ENCODE measurements at regions of chr19 and their contacts with region 1.

Region 1: GRCh38 chr19:12202250-12202649 is 39.4 kb downstream of the ZNF136 start:
- DNase-seq: peak; percentile 44 to 79 (median 60)
- ATAC-seq: peak; percentile 91
- H3K4me3 ChIP-seq: no peak overlapping the region
- H3K4me3 Mint-ChIP-seq: peak overlapping the region; percentile 49
- H3K27ac ChIP-seq: no peak overlapping the region
- H3K27ac Mint-ChIP-seq: peak overlapping the region; percentile 51
- H3K4me1 ChIP-seq: peaks cover 15% of the 10 kb centered on the region
- H3K4me1 Mint-ChIP-seq: peaks cover 47% of the 10 kb centered on the region
- H3K27me3 ChIP-seq: no peaks in the 10 kb centered on the region
- H3K27me3 Mint-ChIP-seq: no peaks in the 10 kb centered on the region
- CTCF ChIP-seq: peak; percentile 71

Region 2: DNA sequence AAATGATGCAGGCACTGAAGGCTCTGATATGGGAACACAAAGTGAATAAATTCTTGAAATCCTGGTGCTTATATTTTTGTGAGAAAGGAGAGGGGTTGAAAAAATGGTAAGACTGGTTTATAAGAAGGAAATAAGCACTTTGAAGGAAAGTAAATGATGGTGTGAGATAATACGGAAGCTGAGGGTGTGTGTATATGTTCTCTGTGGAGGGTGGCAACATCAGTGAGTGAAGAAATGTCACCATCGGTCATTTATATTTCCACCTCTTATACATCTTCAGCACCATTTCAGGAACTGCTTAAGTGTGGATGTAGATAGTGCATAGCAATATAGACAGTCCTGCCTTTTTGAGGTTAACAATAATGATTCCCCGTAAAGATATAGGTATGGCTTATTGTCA is 21.9 kb before region 1 on chr19:
- CTCF ChIA-PET with region 1: no interaction called
- POLR2A ChIA-PET with region 1: no interaction called
- intact Hi-C with region 1: no loop called
- DNase-seq: no peak
- ATAC-seq: no peak
- H3K4me3 ChIP-seq: no peak overlapping the region
- H3K4me3 Mint-ChIP-seq: no peak overlapping the region
- H3K27ac ChIP-seq: no peak overlapping the region
- H3K27ac Mint-ChIP-seq: no peak overlapping the region
- H3K4me1 ChIP-seq: peaks cover 5% of the 10 kb centered on the region
- H3K4me1 Mint-ChIP-seq: peaks cover 29% of the 10 kb centered on the region
- H3K27me3 ChIP-seq: no peaks in the 10 kb centered on the region
- H3K27me3 Mint-ChIP-seq: no peaks in the 10 kb centered on the region
- CTCF ChIP-seq: no peak

Region 3: GRCh38 chr19:12244370-12244769 is 42.1 kb after region 1 on chr19:
- CTCF ChIA-PET with region 1: no interaction called
- POLR2A ChIA-PET with region 1: no interaction called
- intact Hi-C with region 1: no loop called
- DNase-seq: no peak
- ATAC-seq: no peak
- H3K4me3 ChIP-seq: no peak overlapping the region
- H3K4me3 Mint-ChIP-seq: no peak overlapping the region
- H3K27ac ChIP-seq: no peak overlapping the region
- H3K27ac Mint-ChIP-seq: no peak overlapping the region
- H3K4me1 ChIP-seq: no peaks in the 10 kb centered on the region
- H3K4me1 Mint-ChIP-seq: no peaks in the 10 kb centered on the region
- H3K27me3 ChIP-seq: no peaks in the 10 kb centered on the region
- H3K27me3 Mint-ChIP-seq: no peaks in the 10 kb centered on the region
- CTCF ChIP-seq: no peak

Region 4: DNA sequence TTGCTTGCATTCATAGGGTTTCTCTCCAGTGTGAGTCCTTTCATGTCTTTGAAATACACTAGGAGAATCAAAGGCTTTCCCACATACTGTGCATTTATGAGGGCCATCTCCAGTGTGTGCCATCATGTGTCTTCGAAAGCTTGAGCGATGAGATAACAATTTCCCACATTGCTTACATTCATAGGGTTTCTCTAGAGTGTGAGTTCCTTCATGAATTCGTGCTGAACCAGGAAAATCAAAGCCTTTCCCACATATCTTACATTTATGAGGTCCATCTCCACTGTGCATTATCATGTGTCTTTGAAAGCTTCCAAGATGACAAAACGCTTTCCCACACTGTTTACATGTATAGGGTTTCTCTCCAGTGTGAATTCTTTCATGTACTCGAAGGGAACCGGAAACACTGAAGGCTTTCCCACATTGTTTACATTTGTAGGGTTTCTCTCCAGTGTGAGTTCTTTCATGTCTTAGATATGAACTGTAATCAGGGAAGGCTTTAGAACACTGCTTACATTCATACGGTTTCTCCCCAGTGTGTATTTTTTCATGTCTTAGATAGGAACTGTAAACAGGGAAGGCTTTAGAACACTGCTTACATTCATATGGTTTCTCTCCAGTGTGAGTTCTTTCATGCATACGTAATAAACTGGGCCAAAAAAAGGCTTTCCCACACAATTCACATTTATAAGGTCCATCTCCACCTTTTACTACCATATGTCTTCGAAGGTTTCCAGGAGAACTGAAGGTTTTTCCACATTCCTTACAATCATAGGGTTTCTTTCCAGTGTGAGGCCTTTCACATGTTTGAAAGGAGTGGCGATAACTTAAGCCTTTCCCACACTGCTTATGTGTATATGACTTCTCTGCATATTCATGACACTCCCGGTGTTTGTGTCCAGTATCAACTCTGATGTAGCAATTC is 71.0 kb after region 1 on chr19:
- CTCF ChIA-PET with region 1: no interaction called
- POLR2A ChIA-PET with region 1: no interaction called
- intact Hi-C with region 1: loop called in 1 of 2 experiments (anchors 5 kb)
- DNase-seq: no peak
- ATAC-seq: no peak
- H3K4me3 ChIP-seq: no peak overlapping the region
- H3K4me3 Mint-ChIP-seq: no peak overlapping the region
- H3K27ac ChIP-seq: no peak overlapping the region
- H3K27ac Mint-ChIP-seq: peak overlapping the region; percentile 18
- H3K4me1 ChIP-seq: peaks cover 4% of the 10 kb centered on the region
- H3K4me1 Mint-ChIP-seq: peaks cover 18% of the 10 kb centered on the region
- H3K27me3 ChIP-seq: no peaks in the 10 kb centered on the region
- H3K27me3 Mint-ChIP-seq: no peaks in the 10 kb centered on the region
- CTCF ChIP-seq: no peak

Region 5: DNA sequence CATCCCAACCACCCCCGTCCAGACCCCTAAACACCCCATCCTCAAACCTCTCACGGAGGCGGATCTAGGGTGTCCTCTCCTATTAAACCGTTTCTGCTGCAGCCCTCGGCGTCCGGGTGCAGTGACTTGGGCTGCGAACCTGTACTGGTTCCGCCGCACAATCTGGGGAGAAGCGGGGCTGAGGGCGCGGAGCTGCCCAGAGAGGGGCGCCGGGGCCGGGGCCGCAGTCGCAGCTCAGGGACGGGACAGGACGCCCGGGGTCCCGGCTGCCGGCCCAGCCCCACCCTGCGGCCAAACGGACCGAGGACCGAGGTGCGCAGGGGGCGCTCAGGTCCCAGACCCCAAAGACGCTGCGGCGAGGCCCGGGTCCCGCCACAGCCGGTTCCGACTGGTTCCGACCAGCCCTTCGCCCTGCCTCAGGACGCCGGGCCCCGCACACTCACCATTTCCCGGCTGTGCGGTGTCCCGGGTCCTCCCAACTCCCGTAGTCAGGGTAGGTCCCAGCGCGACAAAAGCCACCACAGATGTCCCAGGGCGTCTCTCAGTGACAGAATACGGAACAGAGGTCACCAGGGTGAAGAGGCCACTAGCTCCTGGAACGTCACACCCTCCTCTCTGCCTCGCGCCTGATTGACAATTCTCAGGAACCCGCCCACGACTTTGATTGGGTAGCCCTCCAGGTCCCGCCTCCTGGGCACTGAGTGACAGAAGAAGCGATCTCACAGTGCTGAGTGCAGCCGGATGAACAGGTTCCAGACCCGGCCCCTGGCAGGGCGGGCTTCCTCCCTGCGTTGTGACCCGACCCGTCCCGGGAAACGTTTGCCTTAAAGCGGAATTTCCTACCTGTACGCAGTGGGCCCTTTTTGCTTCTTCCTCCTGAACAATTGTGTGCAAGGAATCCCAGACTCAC is 92.3 kb after region 1 on chr19 and contains the start of gene ZNF44:
- CTCF ChIA-PET with region 1: no interaction called
- POLR2A ChIA-PET with region 1: no interaction called
- intact Hi-C with region 1: loop called (anchors 5 to 10 kb)
- DNase-seq: peak; percentile 88 to 99 (median 94)
- ATAC-seq: peak; percentile 95
- H3K4me3 ChIP-seq: peak within 1 kb of the TSS; percentile 96
- H3K4me3 Mint-ChIP-seq: peak within 1 kb of the TSS; percentile 98
- H3K27ac ChIP-seq: peak within 1 kb of the TSS; percentile 78 to 92
- H3K27ac Mint-ChIP-seq: peak within 1 kb of the TSS; percentile 99
- H3K4me1 ChIP-seq: peaks cover 46% of the 10 kb centered on the region
- H3K4me1 Mint-ChIP-seq: peaks cover 41% of the 10 kb centered on the region
- H3K27me3 ChIP-seq: no peaks in the 10 kb centered on the region
- H3K27me3 Mint-ChIP-seq: no peaks in the 10 kb centered on the region
- CTCF ChIP-seq: no peak
- total RNA-seq, gene ZNF44: 30.4 to 31.4 TPM

Region 6: GRCh38 chr19:12346896-12347295 is 144.6 kb after region 1 on chr19:
- CTCF ChIA-PET with region 1: interaction called, 3 read pairs
- POLR2A ChIA-PET with region 1: no interaction called
- intact Hi-C with region 1: loop called (anchors 1 kb)
- DNase-seq: peak in 5 of 14 experiments; percentile 15 to 73 (median 56)
- ATAC-seq: peak; percentile 52
- H3K4me3 ChIP-seq: no peak overlapping the region
- H3K4me3 Mint-ChIP-seq: no peak overlapping the region
- H3K27ac ChIP-seq: no peak overlapping the region
- H3K27ac Mint-ChIP-seq: no peak overlapping the region
- H3K4me1 ChIP-seq: no peaks in the 10 kb centered on the region
- H3K4me1 Mint-ChIP-seq: no peaks in the 10 kb centered on the region
- H3K27me3 ChIP-seq: no peaks in the 10 kb centered on the region
- H3K27me3 Mint-ChIP-seq: no peaks in the 10 kb centered on the region
- CTCF ChIP-seq: peak; percentile 58

Region 7: DNA sequence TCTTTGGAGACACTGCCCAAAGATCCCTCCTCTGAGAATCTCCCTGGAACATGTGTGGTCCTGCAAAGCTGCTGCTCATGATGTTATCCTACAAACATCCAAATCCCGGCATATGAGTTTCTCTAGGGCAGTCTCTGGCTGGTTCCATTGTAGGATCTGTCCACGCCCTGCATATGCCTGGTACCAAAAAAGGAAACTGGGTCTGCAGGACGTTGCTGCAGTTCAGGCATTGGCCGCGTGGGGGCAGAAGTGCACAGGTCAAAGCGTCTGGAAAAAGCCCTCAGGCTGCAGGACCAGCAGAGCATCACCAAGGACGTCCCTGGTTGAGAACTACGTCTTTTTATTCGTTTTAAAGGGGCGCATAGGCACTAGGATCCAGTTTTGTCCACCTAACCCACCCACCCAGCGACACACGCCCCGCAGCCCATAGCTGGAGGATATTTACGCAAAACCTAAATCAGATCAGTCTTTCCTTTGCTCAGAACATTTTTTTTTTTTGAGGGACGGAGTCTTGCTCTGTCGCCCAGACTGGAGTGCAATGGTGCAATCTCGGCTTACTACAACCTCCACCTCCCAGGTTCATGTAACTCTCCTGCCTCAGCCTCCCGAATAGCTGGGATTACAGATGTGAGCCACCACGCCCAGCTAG is 361.9 kb after region 1 on chr19:
- CTCF ChIA-PET with region 1: no interaction called
- POLR2A ChIA-PET with region 1: no interaction called
- intact Hi-C with region 1: loop called in 1 of 2 experiments (anchors 5 kb)
- DNase-seq: peak; percentile 76 to 97 (median 92)
- ATAC-seq: peak; percentile 100
- H3K4me3 ChIP-seq: no peak overlapping the region
- H3K4me3 Mint-ChIP-seq: no peak overlapping the region
- H3K27ac ChIP-seq: no peak overlapping the region
- H3K27ac Mint-ChIP-seq: no peak overlapping the region
- H3K4me1 ChIP-seq: peaks cover 8% of the 10 kb centered on the region
- H3K4me1 Mint-ChIP-seq: peaks cover 5% of the 10 kb centered on the region
- H3K27me3 ChIP-seq: no peaks in the 10 kb centered on the region
- H3K27me3 Mint-ChIP-seq: no peaks in the 10 kb centered on the region
- CTCF ChIP-seq: peak; percentile 98

Measured in CD4-positive, alpha-beta T cell (primary cell).